ENCODE measurements at regions of chr11 and their contacts with region 1.

Region 1: GRCh38 chr11:10540923-10541560 is at the start of gene RNF141:
- DNase-seq: peak; percentile 95
- H3K4me3 Mint-ChIP-seq: peak within 1 kb of the TSS; percentile 86
- H3K27ac Mint-ChIP-seq: peak within 1 kb of the TSS; percentile 61
- H3K4me1 Mint-ChIP-seq: peaks cover 17% of the 10 kb centered on the region
- H3K27me3 Mint-ChIP-seq: peaks cover 3% of the 10 kb centered on the region
- total RNA-seq, gene RNF141: 12.2 to 12.3 TPM

Region 2: DNA sequence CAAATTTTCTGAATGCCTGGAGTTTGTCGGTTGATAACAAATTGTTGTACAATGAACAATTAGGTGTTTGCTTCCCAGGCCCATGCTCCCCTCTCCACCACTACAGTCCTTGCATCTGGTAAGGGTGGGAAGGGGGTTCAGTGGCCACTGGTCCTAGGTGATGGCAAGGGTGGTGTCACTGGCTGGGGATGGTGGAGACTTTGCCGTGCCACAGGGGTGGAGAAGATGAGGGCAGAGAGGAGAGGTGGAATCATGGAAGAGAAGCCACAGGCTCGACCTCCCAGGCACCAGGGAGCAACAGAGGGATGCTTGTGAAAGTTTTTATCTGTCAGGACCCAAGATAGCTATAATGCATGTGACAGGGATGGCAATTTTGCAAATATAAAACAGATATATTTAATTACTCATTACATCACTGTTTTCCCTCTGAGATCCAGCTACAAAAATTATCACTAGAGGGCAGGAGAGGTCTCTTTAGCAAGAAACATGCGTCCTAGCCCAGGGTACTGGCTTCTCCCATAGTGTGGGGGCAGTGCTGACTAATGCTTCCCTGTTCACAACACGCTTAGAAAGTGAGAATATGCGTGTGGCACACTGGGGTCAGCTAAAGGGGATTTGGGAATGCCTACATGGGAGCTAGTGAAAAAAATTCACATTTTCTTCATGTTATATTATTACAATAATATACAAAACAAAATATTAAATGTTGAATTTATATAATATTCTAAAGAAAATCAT is 135.0 kb before region 1 on chr11:
- CTCF ChIA-PET with region 1: interaction called, 24 read pairs
- POLR2A ChIA-PET with region 1: interaction called, 7 read pairs
- DNase-seq: peak; percentile 45
- H3K4me3 Mint-ChIP-seq: no peak overlapping the region
- H3K27ac Mint-ChIP-seq: no peak overlapping the region
- H3K4me1 Mint-ChIP-seq: peaks cover 41% of the 10 kb centered on the region
- H3K27me3 Mint-ChIP-seq: no peaks in the 10 kb centered on the region

Region 3: DNA sequence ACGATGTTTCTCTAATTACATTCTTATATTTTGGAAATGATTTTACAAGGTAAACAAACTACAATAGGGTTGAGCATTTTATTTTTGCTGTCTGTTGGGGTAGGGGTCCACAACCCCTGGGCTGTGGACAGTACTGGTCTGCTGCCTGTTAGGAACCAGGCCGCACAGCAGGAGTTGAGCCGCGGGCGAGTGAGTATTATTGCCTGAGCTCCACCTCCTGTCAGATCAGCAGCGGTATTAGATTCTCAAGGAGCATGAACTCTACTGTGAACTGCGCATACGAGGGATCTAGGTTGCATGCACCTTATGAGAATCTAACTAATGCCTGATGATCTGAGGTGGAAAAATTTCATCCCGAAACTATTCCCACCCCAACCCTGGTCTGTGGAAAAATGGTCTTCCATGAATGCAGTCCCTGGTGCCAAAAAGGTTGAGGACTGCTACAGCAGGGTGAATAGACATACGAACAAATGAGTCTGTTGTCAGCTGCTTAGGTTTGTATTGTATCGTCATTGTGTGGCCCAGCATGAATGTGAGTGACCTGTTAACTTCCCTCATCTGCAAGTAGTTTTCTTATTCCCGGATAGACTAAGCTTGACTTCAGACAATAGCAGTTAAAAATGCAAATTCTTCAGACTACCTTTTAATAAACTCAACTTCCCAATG is 29.9 kb before region 1 on chr11:
- CTCF ChIA-PET with region 1: interaction called, 21 read pairs
- POLR2A ChIA-PET with region 1: no interaction called
- DNase-seq: no peak
- H3K4me3 Mint-ChIP-seq: no peak overlapping the region
- H3K27ac Mint-ChIP-seq: no peak overlapping the region
- H3K4me1 Mint-ChIP-seq: peaks cover 8% of the 10 kb centered on the region
- H3K27me3 Mint-ChIP-seq: no peaks in the 10 kb centered on the region

Region 4: DNA sequence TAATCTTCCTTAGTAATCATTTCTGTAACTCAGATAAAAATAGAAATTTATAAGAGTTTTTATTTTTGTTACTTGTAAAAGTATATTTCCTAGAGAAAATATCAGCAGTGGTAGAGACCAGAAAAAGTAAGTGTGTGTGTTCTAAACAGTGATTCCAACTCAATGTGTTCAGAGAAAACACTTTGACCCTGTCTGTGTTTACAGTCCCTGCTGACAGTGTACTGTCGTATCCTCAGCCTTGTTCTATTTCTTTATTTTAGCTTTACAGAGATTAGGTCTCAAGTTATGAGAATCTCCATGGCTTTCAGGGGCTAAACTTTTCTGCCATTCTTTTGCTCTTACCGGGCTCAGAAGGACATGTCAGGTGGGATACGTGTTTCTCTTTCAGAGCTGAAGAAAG is 17.2 kb after region 1 on chr11:
- CTCF ChIA-PET with region 1: interaction called, 10 read pairs
- POLR2A ChIA-PET with region 1: interaction called, 4 read pairs
- DNase-seq: no peak
- H3K4me3 Mint-ChIP-seq: no peak overlapping the region
- H3K27ac Mint-ChIP-seq: no peak overlapping the region
- H3K4me1 Mint-ChIP-seq: no peaks in the 10 kb centered on the region
- H3K27me3 Mint-ChIP-seq: peaks cover 17% of the 10 kb centered on the region

Region 5: GRCh38 chr11:10594407-10594806 is 53.4 kb after region 1 on chr11:
- CTCF ChIA-PET with region 1: interaction called, 25 read pairs
- POLR2A ChIA-PET with region 1: no interaction called
- DNase-seq: no peak
- H3K4me3 Mint-ChIP-seq: no peak overlapping the region
- H3K27ac Mint-ChIP-seq: peak overlapping the region; percentile 66
- H3K4me1 Mint-ChIP-seq: peaks cover 42% of the 10 kb centered on the region
- H3K27me3 Mint-ChIP-seq: peaks cover 13% of the 10 kb centered on the region

Region 6: DNA sequence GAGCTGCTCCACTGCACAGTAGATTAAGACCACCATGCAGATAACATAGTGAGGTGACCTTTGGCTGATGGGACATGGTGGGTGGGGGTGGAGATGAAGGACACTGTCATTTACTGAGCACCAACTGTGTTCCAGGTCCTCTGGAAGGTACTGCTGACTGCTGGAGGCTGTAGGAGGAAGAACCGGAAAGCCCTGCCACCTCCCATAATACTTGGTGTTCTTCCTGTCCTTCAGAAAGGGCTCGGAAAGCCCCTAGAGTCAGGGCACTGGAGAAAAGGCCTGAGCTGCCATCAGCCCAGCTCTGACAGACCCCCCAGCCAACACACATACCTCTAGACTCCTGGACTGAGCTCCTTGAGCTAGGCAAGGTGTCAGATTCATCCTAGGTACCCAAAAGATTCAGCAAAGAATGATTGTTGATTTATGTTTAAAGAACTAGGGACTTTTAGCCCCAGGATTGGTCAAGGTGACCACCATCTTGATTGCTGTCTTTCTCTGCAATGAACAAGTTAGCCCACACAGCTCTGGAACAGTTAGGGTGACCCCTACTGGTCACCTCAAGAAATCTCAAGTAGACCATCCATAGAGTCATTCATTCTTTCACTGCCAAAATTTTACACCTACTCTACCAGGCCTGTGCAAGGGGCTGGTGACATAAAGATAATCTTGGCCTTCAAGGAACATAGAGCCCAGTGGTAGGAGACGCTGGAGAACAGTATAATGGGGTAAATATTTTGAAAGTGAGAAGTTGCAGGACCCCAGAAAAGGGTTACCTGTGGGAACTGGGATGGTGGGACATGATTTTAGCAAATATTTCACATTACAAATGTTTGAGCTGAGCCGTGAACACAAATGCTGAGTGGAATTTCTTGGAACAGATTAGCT is 113.1 kb after region 1 on chr11:
- CTCF ChIA-PET with region 1: interaction called, 46 read pairs
- POLR2A ChIA-PET with region 1: interaction called, 5 read pairs
- DNase-seq: peak; percentile 49
- H3K4me3 Mint-ChIP-seq: no peak overlapping the region
- H3K27ac Mint-ChIP-seq: no peak overlapping the region
- H3K4me1 Mint-ChIP-seq: peaks cover 39% of the 10 kb centered on the region
- H3K27me3 Mint-ChIP-seq: no peaks in the 10 kb centered on the region

Measured in activated CD4-positive, alpha-beta memory T cell treated with anti-CD3 and anti-CD28 coated beads, Interleukin-2, amount 10 ng/mL, durations not matched to agents 7 days and 5 days (primary cell).